ENCODE measurements at regions of chr20 and their contacts with region 1.

Region 1: GRCh38 chr20:40168981-40169620 is 519.9 kb downstream of the MAFB start:
- DNase-seq: no peak
- H3K4me3 ChIP-seq: no peak overlapping the region
- H3K27ac ChIP-seq: no peak overlapping the region
- H3K4me1 ChIP-seq: no peaks in the 10 kb centered on the region
- H3K27me3 ChIP-seq: no peaks in the 10 kb centered on the region
- CTCF ChIP-seq: no peak
- EP300 ChIP-seq: no peak
- POLR2A ChIP-seq: no peak

Region 2: GRCh38 chr20:40797425-40797824 is 628.3 kb after region 1 on chr20:
- in situ Hi-C with region 1: no loop called
- intact Hi-C with region 1: loop called (anchors 5 kb)
- DNase-seq: no peak
- H3K4me3 ChIP-seq: no peak overlapping the region
- H3K27ac ChIP-seq: no peak overlapping the region
- H3K4me1 ChIP-seq: no peaks in the 10 kb centered on the region
- H3K27me3 ChIP-seq: peaks cover 6% of the 10 kb centered on the region
- CTCF ChIP-seq: peak in 3 of 5 experiments; percentile 10 to 46 (median 31)
- EP300 ChIP-seq: no peak
- POLR2A ChIP-seq: no peak